MCF 10A (cell line): ENCODE measurements at regions of chr9 and their contacts with region 1.

Region 1: GRCh38 chr9:14353222-14354056 is 39.5 kb upstream of the NFIB start:
- DNase-seq: peak; percentile 85
- H3K4me3 Mint-ChIP-seq: peak overlapping the region; percentile 56
- H3K27ac Mint-ChIP-seq: peak overlapping the region; percentile 60
- H3K4me1 Mint-ChIP-seq: peaks cover 11% of the 10 kb centered on the region
- H3K27me3 Mint-ChIP-seq: no peaks in the 10 kb centered on the region
- CTCF ChIP-seq: peak; percentile 84

Region 2: GRCh38 chr9:13033959-13034693 is 1319.3 kb before region 1 on chr9:
- CTCF ChIA-PET with region 1: interaction called, 3 read pairs
- POLR2A ChIA-PET with region 1: no interaction called
- intact Hi-C with region 1: loop called (anchors 5 kb)
- DNase-seq: peak; percentile 68
- H3K4me3 Mint-ChIP-seq: peak overlapping the region; percentile 30
- H3K27ac Mint-ChIP-seq: no peak overlapping the region
- H3K4me1 Mint-ChIP-seq: peaks cover 16% of the 10 kb centered on the region
- H3K27me3 Mint-ChIP-seq: no peaks in the 10 kb centered on the region
- CTCF ChIP-seq: peak; percentile 83

Region 3: GRCh38 chr9:13427587-13427986 is 925.9 kb before region 1 on chr9:
- CTCF ChIA-PET with region 1: interaction called, 64 read pairs
- POLR2A ChIA-PET with region 1: interaction called, 4 read pairs
- intact Hi-C with region 1: loop called (anchors 1 kb)
- DNase-seq: peak; percentile 67
- H3K4me3 Mint-ChIP-seq: no peak overlapping the region
- H3K27ac Mint-ChIP-seq: no peak overlapping the region
- H3K4me1 Mint-ChIP-seq: no peaks in the 10 kb centered on the region
- H3K27me3 Mint-ChIP-seq: no peaks in the 10 kb centered on the region
- CTCF ChIP-seq: peak; percentile 69

Region 4: GRCh38 chr9:14103115-14103514 is 250.3 kb before region 1 on chr9:
- CTCF ChIA-PET with region 1: interaction called, 12 read pairs
- POLR2A ChIA-PET with region 1: no interaction called
- intact Hi-C with region 1: no loop called
- DNase-seq: no peak
- H3K4me3 Mint-ChIP-seq: no peak overlapping the region
- H3K27ac Mint-ChIP-seq: no peak overlapping the region
- H3K4me1 Mint-ChIP-seq: peaks cover 7% of the 10 kb centered on the region
- H3K27me3 Mint-ChIP-seq: no peaks in the 10 kb centered on the region
- CTCF ChIP-seq: no peak

Region 5: DNA sequence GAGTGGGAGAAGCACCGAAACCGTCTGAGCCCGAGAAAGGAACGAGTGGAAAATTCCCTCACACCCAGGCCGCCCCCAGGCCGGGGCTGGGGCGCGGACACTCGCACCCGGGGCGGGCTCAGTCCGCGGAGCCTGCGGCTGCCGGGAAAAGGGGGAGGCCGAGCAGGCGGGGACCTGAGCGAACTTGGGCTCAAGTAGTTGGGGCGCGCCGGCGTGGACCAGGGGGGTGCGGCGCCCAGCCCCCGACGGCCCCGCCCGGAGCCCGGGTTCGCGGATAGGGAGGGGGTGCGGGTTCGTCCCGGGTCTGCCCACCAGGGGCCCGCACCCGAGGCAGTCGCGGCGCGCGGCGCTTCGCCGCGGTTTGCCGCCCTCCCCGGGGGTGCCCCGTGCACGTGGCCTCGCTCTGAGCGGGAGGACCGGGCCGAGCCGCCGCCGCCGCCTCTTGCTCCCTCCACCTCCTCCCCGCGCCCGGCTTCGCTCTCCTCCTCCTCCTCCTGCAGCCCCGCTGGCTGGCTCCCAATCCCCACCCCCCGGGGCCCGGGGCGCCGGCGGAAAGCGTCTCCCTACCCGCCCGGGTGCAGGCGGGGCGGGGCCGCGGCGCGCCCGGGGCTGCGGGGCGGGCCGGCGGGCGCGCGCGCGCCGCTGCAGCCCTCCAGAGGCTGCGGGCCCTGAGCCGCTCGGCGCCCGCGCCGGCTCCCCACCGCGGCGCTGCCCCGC is 38.4 kb before region 1 on chr9:
- CTCF ChIA-PET with region 1: interaction called, 8 read pairs
- POLR2A ChIA-PET with region 1: no interaction called
- intact Hi-C with region 1: loop called (anchors 5 kb)
- DNase-seq: peak; percentile 93
- H3K4me3 Mint-ChIP-seq: peak overlapping the region; percentile 80
- H3K27ac Mint-ChIP-seq: peak overlapping the region; percentile 88
- H3K4me1 Mint-ChIP-seq: peaks cover 40% of the 10 kb centered on the region
- H3K27me3 Mint-ChIP-seq: no peaks in the 10 kb centered on the region
- CTCF ChIP-seq: no peak

Region 6: DNA sequence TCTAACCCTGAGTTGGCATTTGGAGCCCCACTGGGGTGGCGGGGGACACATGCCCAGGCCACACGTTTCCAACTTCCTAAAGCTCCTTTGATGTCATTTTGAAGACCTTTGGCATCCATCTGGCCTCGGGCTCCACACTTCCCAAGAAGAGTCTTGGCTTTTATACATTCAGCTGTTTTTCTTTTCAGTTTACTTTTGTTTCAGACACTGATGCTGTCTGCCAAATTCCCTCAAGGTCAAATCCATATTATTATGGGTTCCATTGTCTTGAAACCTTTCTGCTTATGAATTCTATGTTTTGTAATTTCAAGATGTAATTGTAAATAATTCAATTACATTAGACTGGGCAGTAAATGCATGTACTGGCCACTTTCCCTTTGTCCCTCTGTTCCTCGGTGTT is 15.8 kb before region 1 on chr9:
- CTCF ChIA-PET with region 1: interaction called, 22 read pairs
- POLR2A ChIA-PET with region 1: interaction called, 3 read pairs
- intact Hi-C with region 1: no loop called
- DNase-seq: no peak
- H3K4me3 Mint-ChIP-seq: no peak overlapping the region
- H3K27ac Mint-ChIP-seq: no peak overlapping the region
- H3K4me1 Mint-ChIP-seq: peaks cover under 1% of the 10 kb centered on the region
- H3K27me3 Mint-ChIP-seq: no peaks in the 10 kb centered on the region
- CTCF ChIP-seq: no peak

Region 7: GRCh38 chr9:14383294-14383693 is 29.9 kb after region 1 on chr9:
- CTCF ChIA-PET with region 1: interaction called, 11 read pairs
- POLR2A ChIA-PET with region 1: no interaction called
- intact Hi-C with region 1: no loop called
- DNase-seq: peak; percentile 57
- H3K4me3 Mint-ChIP-seq: no peak overlapping the region
- H3K27ac Mint-ChIP-seq: no peak overlapping the region
- H3K4me1 Mint-ChIP-seq: no peaks in the 10 kb centered on the region
- H3K27me3 Mint-ChIP-seq: no peaks in the 10 kb centered on the region
- CTCF ChIP-seq: no peak